ENCODE measurements at regions of chr19 and their contacts with region 1.

Region 1: DNA sequence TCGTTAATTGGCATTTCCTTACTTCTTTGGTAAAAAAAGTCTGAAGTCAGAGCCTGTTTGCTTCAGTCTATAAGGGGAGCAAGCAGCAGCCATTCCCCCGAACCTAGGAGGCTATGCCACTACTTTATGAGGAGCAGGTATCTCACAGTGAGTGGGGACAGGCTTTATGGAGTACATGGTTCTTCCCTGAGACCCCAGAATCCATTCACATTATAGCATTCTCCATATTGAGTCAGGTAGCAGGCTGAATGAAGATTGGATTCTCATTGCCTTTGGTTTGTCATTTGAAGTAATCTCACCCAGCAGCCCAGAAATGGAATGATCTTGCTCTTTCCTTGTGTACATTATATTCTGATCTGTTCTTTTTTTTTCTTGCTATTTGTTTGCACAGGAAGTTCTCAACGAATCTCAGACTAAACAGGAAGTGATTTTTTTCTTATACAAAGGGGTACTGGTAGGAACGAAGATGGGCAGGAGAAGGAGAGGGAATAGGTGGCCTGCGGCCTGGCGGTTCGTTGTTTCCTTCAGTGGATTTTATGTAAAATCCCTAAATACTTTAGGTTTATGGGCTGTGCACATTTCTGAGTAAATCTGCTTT is 74.4 kb downstream of the ARHGAP35 start:
- DNase-seq: no peak
- H3K4me3 ChIP-seq: no peak overlapping the region
- H3K27ac ChIP-seq: peak overlapping the region in 1 of 2 donors; percentile 17
- H3K4me1 ChIP-seq: peaks cover 0 to 55% (median 41%) of the 10 kb centered on the region in 4 donors
- H3K27me3 ChIP-seq: no peaks in the 10 kb centered on the region
- CTCF ChIP-seq: no peak

Region 2: GRCh38 chr19:46596008-46596407 is 339.2 kb before region 1 on chr19:
- intact Hi-C with region 1: no loop called
- DNase-seq: no peak
- H3K4me3 ChIP-seq: no peak overlapping the region
- H3K27ac ChIP-seq: no peak overlapping the region
- H3K4me1 ChIP-seq: peaks cover 0 to 6% (median 6%) of the 10 kb centered on the region in 4 donors
- H3K27me3 ChIP-seq: no peaks in the 10 kb centered on the region
- CTCF ChIP-seq: no peak

Region 3: GRCh38 chr19:46975925-46976782 is 41.0 kb after region 1 on chr19:
- intact Hi-C with region 1: loop called (anchors 5 kb)
- DNase-seq: peak; percentile 99 to 100
- H3K4me3 ChIP-seq: peak overlapping the region in 1 of 2 donors; percentile 23
- H3K27ac ChIP-seq: peak overlapping the region; percentile 81 to 82
- H3K4me1 ChIP-seq: peaks cover 15 to 90% (median 69%) of the 10 kb centered on the region in 4 donors
- H3K27me3 ChIP-seq: no peaks in the 10 kb centered on the region
- CTCF ChIP-seq: no peak

Region 4: DNA sequence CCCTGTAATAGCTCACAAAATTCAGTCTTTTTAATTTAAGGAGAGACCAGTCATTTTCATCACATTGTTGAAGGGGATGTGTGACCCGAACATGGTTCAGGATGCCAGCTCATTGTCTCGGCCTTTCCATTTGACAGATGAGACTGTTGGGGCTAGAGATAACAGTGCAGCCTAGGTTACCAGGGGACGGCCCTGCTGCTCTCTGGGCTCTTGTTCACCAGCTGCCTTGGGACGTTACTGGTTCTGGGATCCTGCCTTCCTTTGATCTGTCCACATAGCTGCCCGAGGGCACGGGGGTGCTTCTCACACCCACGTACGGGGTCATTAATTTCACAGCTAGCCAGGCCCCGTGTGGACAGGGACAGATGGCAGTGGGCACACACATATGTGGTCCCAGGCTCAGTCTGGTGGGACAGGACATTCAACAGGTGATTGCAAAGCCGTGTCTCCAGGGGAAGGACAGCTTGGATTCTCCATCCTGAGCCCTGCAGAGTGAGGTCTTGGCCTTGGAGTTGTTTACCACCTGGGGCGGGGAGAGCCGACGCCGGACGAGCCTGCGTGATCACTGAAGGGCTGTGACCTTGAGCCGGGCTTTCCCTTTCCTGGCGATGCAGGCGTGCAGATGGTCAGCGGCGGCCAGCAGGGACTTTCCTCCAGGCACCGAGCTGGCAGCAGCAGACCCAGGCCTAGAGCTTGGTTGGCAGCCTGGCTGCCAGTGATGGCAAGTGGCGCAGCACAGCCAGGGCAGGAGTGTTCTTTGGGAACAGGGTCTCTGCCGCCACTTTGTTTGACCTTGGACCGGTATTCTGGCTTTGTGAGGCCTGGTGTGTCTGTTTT is 57.8 kb after region 1 on chr19:
- intact Hi-C with region 1: no loop called
- DNase-seq: no peak
- H3K4me3 ChIP-seq: no peak overlapping the region
- H3K27ac ChIP-seq: no peak overlapping the region
- H3K4me1 ChIP-seq: peaks cover 0 to 16% (median 9%) of the 10 kb centered on the region in 4 donors
- H3K27me3 ChIP-seq: no peaks in the 10 kb centered on the region
- CTCF ChIP-seq: no peak